CD4-positive, alpha-beta memory T cell (primary cell): ENCODE measurements at regions of chr2 and their contacts with region 1.

Region 1: GRCh38 chr2:240021488-240022104 is 3.5 kb downstream of the NDUFA10 start:
- DNase-seq: peak; percentile 42 to 73 (median 51)
- H3K4me3 ChIP-seq: no peak overlapping the region
- H3K4me3 Mint-ChIP-seq: no peak overlapping the region
- H3K27ac ChIP-seq: no peak overlapping the region
- H3K27ac Mint-ChIP-seq: peak overlapping the region in 2 of 7 donors; percentile 41 to 65
- H3K4me1 ChIP-seq: peaks cover 20% of the 10 kb centered on the region
- H3K4me1 Mint-ChIP-seq: peaks cover 15 to 34% (median 20%) of the 10 kb centered on the region in 4 donors
- H3K27me3 ChIP-seq: no peaks in the 10 kb centered on the region
- H3K27me3 Mint-ChIP-seq: peaks cover 0 to 2% of the 10 kb centered on the region in 2 donors

Region 2: GRCh38 chr2:240136013-240136670 is 114.5 kb after region 1 on chr2 and contains the start of gene COPS9:
- CTCF ChIA-PET with region 1: interaction called, 3 read pairs
- POLR2A ChIA-PET with region 1: interaction called, 3 read pairs
- intact Hi-C with region 1: loop called (anchors 1 kb)
- DNase-seq: peak; percentile 83 to 88 (median 84)
- H3K4me3 ChIP-seq: peak within 1 kb of the TSS; percentile 84 to 89
- H3K4me3 Mint-ChIP-seq: peak within 1 kb of the TSS; percentile 91 to 96 (median 94)
- H3K27ac ChIP-seq: peak within 1 kb of the TSS; percentile 67
- H3K27ac Mint-ChIP-seq: peak within 1 kb of the TSS; percentile 33 to 96 (median 93)
- H3K4me1 ChIP-seq: peaks cover 23% of the 10 kb centered on the region
- H3K4me1 Mint-ChIP-seq: peaks cover 14 to 41% (median 29%) of the 10 kb centered on the region in 4 donors
- H3K27me3 ChIP-seq: no peaks in the 10 kb centered on the region
- H3K27me3 Mint-ChIP-seq: no peaks in the 10 kb centered on the region
- total RNA-seq, gene COPS9: 82.2 to 82.5 TPM